ENCODE measurements at regions of chr11 and their contacts with region 1.

Region 1: GRCh38 chr11:115504276-115505158 is at the start of gene CADM1:
- DNase-seq: peak; percentile 92
- ATAC-seq: peak; percentile 89
- H3K4me3 ChIP-seq: peak within 1 kb of the TSS; percentile 89 to 92 (median 89)
- H3K27ac ChIP-seq: peak within 1 kb of the TSS; percentile 91
- H3K4me1 ChIP-seq: peaks cover 21% of the 10 kb centered on the region
- H3K27me3 ChIP-seq: no peaks in the 10 kb centered on the region; a peak in 1 of 5 replicates
- CTCF ChIP-seq: peak; percentile 57
- EP300 ChIP-seq: 0 out of 4 replicates have a peak, but pooled peaks of 1 of the 2 experiments have one; percentile 22
- POLR2A ChIP-seq: peak; percentile 97 to 99
- RAD21 ChIP-seq: peak; percentile 61
- total RNA-seq, gene CADM1: 62.2 and 122 TPM in 2 replicates

Region 2: GRCh38 chr11:115334932-115335788 is 169.4 kb before region 1 on chr11:
- CTCF ChIA-PET with region 1: interaction called, 10 read pairs
- POLR2A ChIA-PET with region 1: no interaction called
- in situ Hi-C with region 1: loop called (anchors 5 kb)
- intact Hi-C with region 1: loop called (anchors 2 kb)
- DNase-seq: peak; percentile 19
- ATAC-seq: no peak
- H3K4me3 ChIP-seq: no peak overlapping the region
- H3K27ac ChIP-seq: no peak overlapping the region
- H3K4me1 ChIP-seq: peaks cover 9% of the 10 kb centered on the region; the same call in 1 of the 2 replicates
- H3K27me3 ChIP-seq: peaks cover 0 to 1% of the 10 kb centered on the region in 2 experiments; a peak in 1 of 5 replicates
- CTCF ChIP-seq: peak; percentile 58
- EP300 ChIP-seq: no peak
- POLR2A ChIP-seq: no peak
- RAD21 ChIP-seq: 0 out of 2 replicates have a peak, but pooled peaks have one; percentile 56

Region 3: DNA sequence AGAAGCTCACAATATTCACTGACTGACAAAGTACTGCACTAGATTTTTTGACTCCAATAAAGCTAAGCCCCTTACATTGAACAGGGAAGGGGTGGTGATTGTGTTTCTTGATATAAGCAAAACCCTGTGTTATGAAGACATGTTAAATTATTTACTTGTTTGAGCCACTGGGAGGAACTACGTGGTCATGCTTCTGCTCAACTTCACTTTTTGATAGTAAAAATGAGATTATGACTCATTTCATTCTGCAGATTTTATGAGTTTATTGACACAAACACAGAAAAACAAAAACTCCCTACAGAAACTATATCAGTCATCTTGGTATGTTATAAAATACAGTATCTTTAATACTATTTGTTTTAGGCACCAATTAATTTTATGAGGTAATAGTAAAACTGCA is 125.0 kb before region 1 on chr11:
- CTCF ChIA-PET with region 1: no interaction called
- POLR2A ChIA-PET with region 1: no interaction called
- in situ Hi-C with region 1: no loop called
- intact Hi-C with region 1: loop called (anchors 5 kb)
- DNase-seq: no peak
- ATAC-seq: no peak
- H3K4me3 ChIP-seq: no peak overlapping the region
- H3K27ac ChIP-seq: no peak overlapping the region
- H3K4me1 ChIP-seq: peaks cover 44% of the 10 kb centered on the region
- H3K27me3 ChIP-seq: no peaks in the 10 kb centered on the region
- CTCF ChIP-seq: no peak
- EP300 ChIP-seq: no peak
- POLR2A ChIP-seq: no peak
- RAD21 ChIP-seq: no peak

Region 4: DNA sequence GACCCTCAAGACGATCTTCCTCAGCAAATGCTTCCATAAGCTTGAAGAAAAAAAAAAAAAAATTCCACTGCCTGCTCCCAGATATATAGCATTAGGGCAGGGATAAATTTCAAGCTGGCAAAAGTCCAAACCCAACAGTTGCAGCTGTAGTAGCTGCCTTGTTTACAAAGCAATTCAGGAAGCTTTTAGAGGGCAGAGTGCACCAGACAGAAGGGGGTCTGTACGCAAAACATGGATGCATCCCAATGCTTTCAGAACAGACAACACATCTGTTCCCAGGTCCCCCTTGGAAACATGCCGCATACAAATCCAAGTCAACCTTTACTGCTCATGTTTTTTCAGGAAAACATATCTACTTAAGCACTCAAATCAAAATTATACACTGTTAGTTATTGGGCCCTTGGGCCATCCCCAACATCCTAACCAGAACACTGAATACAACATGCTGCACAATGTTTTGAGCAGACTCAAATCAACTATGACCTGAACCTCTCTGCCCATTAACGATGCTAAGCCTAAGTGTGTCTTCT is 94.8 kb before region 1 on chr11:
- CTCF ChIA-PET with region 1: no interaction called
- POLR2A ChIA-PET with region 1: interaction called, 5 read pairs
- in situ Hi-C with region 1: no loop called
- intact Hi-C with region 1: loop called (anchors 5 kb)
- DNase-seq: peak; percentile 94
- ATAC-seq: peak; percentile 98
- H3K4me3 ChIP-seq: peak overlapping the region; percentile 2 to 35 (median 17); a peak in 3 of 6 replicates
- H3K27ac ChIP-seq: peak overlapping the region; percentile 49
- H3K4me1 ChIP-seq: peaks cover 49% of the 10 kb centered on the region
- H3K27me3 ChIP-seq: no peaks in the 10 kb centered on the region
- CTCF ChIP-seq: no peak
- EP300 ChIP-seq: peak in 1 of 2 experiments; percentile 75; a peak in 3 of 4 replicates
- POLR2A ChIP-seq: no peak
- RAD21 ChIP-seq: peak; percentile 39; the same call in 1 of the 2 replicates

Region 5: GRCh38 chr11:115421352-115421991 is 83.0 kb before region 1 on chr11:
- CTCF ChIA-PET with region 1: no interaction called
- POLR2A ChIA-PET with region 1: no interaction called
- in situ Hi-C with region 1: no loop called
- intact Hi-C with region 1: loop called (anchors 5 kb)
- DNase-seq: no peak
- ATAC-seq: no peak
- H3K4me3 ChIP-seq: no peak overlapping the region
- H3K27ac ChIP-seq: no peak overlapping the region
- H3K4me1 ChIP-seq: peaks cover 15% of the 10 kb centered on the region
- H3K27me3 ChIP-seq: no peaks in the 10 kb centered on the region
- CTCF ChIP-seq: no peak
- EP300 ChIP-seq: no peak
- POLR2A ChIP-seq: no peak
- RAD21 ChIP-seq: no peak

Region 6: GRCh38 chr11:115522302-115522701 is 17.8 kb after region 1 on chr11:
- CTCF ChIA-PET with region 1: no interaction called
- POLR2A ChIA-PET with region 1: interaction called, 20 read pairs
- in situ Hi-C with region 1: no loop called
- intact Hi-C with region 1: loop called (anchors 2 kb)
- DNase-seq: no peak
- ATAC-seq: no peak
- H3K4me3 ChIP-seq: no peak overlapping the region
- H3K27ac ChIP-seq: no peak overlapping the region
- H3K4me1 ChIP-seq: peaks cover 81% of the 10 kb centered on the region
- H3K27me3 ChIP-seq: no peaks in the 10 kb centered on the region
- CTCF ChIP-seq: no peak
- EP300 ChIP-seq: no peak
- POLR2A ChIP-seq: no peak
- RAD21 ChIP-seq: no peak

Region 7: GRCh38 chr11:115678942-115679341 is 174.4 kb after region 1 on chr11:
- CTCF ChIA-PET with region 1: no interaction called
- POLR2A ChIA-PET with region 1: no interaction called
- in situ Hi-C with region 1: no loop called
- intact Hi-C with region 1: loop called (anchors 2 kb)
- DNase-seq: peak; percentile 37
- ATAC-seq: peak; percentile 96
- H3K4me3 ChIP-seq: no peak overlapping the region
- H3K27ac ChIP-seq: no peak overlapping the region
- H3K4me1 ChIP-seq: no peaks in the 10 kb centered on the region
- H3K27me3 ChIP-seq: peaks cover 1 to 13% of the 10 kb centered on the region in 2 experiments; a peak in 1 of 5 replicates
- CTCF ChIP-seq: peak; percentile 77
- EP300 ChIP-seq: no peak
- POLR2A ChIP-seq: no peak
- RAD21 ChIP-seq: peak; percentile 75